ENCODE measurements at regions of chr1 and their contacts with region 1.

Region 1: GRCh38 chr1:147627435-147628110 is 42.8 kb downstream of the ACP6 start:
- DNase-seq: peak; percentile 46
- H3K4me3 ChIP-seq: no peak overlapping the region
- H3K27ac ChIP-seq: no peak overlapping the region
- H3K4me1 ChIP-seq: no peaks in the 10 kb centered on the region
- H3K27me3 ChIP-seq: no peaks in the 10 kb centered on the region
- CTCF ChIP-seq: peak; percentile 87

Region 2: GRCh38 chr1:147494998-147495580 is 132.5 kb before region 1 on chr1:
- intact Hi-C with region 1: loop called (anchors 5 kb)
- DNase-seq: peak; percentile 74
- H3K4me3 ChIP-seq: no peak overlapping the region
- H3K27ac ChIP-seq: no peak overlapping the region
- H3K4me1 ChIP-seq: no peaks in the 10 kb centered on the region
- H3K27me3 ChIP-seq: no peaks in the 10 kb centered on the region
- CTCF ChIP-seq: peak; percentile 91

Region 3: GRCh38 chr1:147515046-147515869 is 112.3 kb before region 1 on chr1:
- intact Hi-C with region 1: loop called (anchors 5 kb)
- DNase-seq: peak; percentile 42
- H3K4me3 ChIP-seq: no peak overlapping the region
- H3K27ac ChIP-seq: no peak overlapping the region
- H3K4me1 ChIP-seq: no peaks in the 10 kb centered on the region
- H3K27me3 ChIP-seq: no peaks in the 10 kb centered on the region
- CTCF ChIP-seq: peak; percentile 32

Measured in colonic mucosa (tissue), 4 donors.